CD8-positive, alpha-beta memory T cell (primary cell): ENCODE measurements at regions of chr1 and their contacts with region 1.

Region 1: GRCh38 chr1:56831871-56832693 is 12.9 kb upstream of the FYB2 start:
- DNase-seq: peak; percentile 46 to 70 (median 55)
- H3K4me3 ChIP-seq: no peak overlapping the region
- H3K4me3 Mint-ChIP-seq: peak overlapping the region in 1 of 7 donors; percentile 43
- H3K27ac ChIP-seq: no peak overlapping the region
- H3K27ac Mint-ChIP-seq: no peak overlapping the region
- H3K4me1 ChIP-seq: no peaks in the 10 kb centered on the region
- H3K4me1 Mint-ChIP-seq: peaks cover 4 to 8% (median 8%) of the 10 kb centered on the region in 3 donors
- H3K27me3 ChIP-seq: no peaks in the 10 kb centered on the region
- H3K27me3 Mint-ChIP-seq: peaks cover 4 to 16% of the 10 kb centered on the region in 2 donors

Region 2: DNA sequence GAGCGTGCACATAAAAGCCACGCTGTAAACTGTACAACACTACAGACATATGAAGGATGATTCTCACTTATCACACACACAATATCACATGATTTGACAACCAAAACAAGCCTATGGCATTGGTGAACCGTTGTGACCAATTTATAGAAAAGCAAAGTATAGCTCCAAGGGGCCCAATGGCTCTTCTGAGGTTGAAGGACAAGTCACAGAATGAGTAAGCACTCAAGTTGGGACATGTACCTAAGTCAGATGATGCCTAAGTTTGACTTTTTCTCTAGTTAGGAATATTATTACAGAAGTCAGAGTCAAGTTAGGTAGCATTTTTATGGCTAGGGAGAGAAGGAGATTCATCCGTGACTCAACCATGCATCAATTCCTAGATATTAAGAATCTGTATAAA is 298.5 kb before region 1 on chr1:
- CTCF ChIA-PET with region 1: no interaction called
- POLR2A ChIA-PET with region 1: no interaction called
- DNase-seq: no peak
- H3K4me3 ChIP-seq: no peak overlapping the region
- H3K4me3 Mint-ChIP-seq: no peak overlapping the region
- H3K27ac ChIP-seq: no peak overlapping the region
- H3K27ac Mint-ChIP-seq: no peak overlapping the region
- H3K4me1 ChIP-seq: no peaks in the 10 kb centered on the region
- H3K4me1 Mint-ChIP-seq: no peaks in the 10 kb centered on the region
- H3K27me3 ChIP-seq: no peaks in the 10 kb centered on the region
- H3K27me3 Mint-ChIP-seq: peaks cover 0 to 7% of the 10 kb centered on the region in 2 donors

Region 3: DNA sequence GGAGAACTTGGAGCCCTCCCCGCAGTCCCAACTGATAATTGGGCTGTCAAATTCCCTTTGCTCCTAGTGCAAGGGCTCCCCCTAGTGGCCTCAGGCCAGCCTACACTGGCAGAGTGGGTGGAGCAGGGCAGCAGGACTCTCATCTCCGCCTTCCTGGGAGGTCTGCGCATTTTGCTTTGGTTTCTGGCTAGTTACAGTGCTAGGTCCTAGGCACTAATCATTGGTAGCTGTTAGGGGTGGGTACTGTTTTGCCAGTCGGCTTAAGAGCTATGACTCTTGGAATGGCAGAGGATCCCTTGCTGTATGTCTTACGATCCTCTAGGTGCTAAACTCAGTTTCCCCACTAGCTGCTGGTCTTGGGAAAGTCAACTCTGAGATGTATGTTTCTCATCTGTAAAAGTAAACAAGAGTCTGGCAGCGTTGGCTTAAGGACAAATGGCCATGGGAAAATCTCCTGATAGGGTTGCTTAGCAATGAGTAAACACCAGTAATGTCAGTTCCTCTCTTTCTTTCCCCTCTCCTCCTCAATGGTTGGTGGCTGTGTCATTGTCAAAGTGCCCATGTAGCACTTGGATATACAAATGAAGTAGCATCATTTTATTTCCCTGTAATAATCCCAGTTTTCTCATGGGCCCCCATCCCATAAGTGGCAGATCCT is 10.8 kb before region 1 on chr1:
- CTCF ChIA-PET with region 1: interaction called, 16 read pairs
- POLR2A ChIA-PET with region 1: no interaction called
- DNase-seq: peak; percentile 6 to 55 (median 36)
- H3K4me3 ChIP-seq: no peak overlapping the region
- H3K4me3 Mint-ChIP-seq: no peak overlapping the region
- H3K27ac ChIP-seq: no peak overlapping the region
- H3K27ac Mint-ChIP-seq: no peak overlapping the region
- H3K4me1 ChIP-seq: no peaks in the 10 kb centered on the region
- H3K4me1 Mint-ChIP-seq: no peaks in the 10 kb centered on the region
- H3K27me3 ChIP-seq: no peaks in the 10 kb centered on the region
- H3K27me3 Mint-ChIP-seq: peaks cover 8 to 22% of the 10 kb centered on the region in 2 donors

Region 4: DNA sequence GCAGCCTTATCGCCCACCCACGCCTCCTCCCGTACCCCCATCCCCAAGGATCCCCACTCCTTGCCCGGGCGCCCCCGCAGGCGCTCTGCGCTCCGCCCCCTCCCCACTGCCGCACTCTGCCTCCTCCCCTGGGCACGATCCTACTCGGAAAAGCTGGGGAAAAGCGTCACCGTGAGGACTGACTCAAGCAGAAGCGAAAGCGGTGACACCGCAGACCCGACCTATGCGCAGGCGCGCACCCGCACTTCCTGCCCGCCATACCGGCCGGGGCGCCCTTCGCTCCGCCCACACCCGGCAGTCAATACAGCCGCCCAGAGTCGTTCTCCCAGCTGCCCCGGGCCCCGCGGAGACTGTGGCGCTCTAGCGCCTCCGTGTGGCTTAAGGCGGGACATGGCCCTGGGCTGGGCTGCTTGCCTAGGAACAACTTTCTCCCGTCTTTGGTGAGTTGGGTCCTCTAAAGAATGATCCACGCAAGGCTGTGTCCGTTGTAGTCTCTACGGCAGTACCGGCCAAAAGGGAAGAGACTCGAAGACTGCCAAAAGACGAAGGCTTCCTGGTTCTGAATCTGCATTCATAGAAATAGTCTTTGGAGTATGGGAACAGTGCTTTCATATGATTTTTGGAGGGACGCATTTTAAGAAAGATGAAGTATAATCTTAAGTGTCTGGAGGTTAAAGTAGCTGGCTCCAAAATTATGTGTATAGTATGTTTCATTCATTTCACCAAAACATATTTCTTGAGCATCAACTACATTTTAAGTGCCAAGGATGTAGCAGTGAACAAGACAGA is 1714.6 kb after region 1 on chr1 and contains the start of gene OMA1:
- CTCF ChIA-PET with region 1: interaction called, 10 read pairs
- POLR2A ChIA-PET with region 1: no interaction called
- DNase-seq: peak; percentile 96 to 98 (median 97)
- H3K4me3 ChIP-seq: peak within 1 kb of the TSS; percentile 59
- H3K4me3 Mint-ChIP-seq: peak within 1 kb of the TSS; percentile 91 to 97 (median 94)
- H3K27ac ChIP-seq: peak within 1 kb of the TSS; percentile 92
- H3K27ac Mint-ChIP-seq: peak within 1 kb of the TSS; percentile 74 to 99 (median 98)
- H3K4me1 ChIP-seq: peaks cover 12% of the 10 kb centered on the region
- H3K4me1 Mint-ChIP-seq: peaks cover 23 to 40% (median 34%) of the 10 kb centered on the region in 3 donors
- H3K27me3 ChIP-seq: no peaks in the 10 kb centered on the region
- H3K27me3 Mint-ChIP-seq: peaks cover 0 to 1% of the 10 kb centered on the region in 2 donors
- total RNA-seq, gene OMA1: 15.9 to 17.6 TPM